Esophagus muscularis mucosa (tissue), 4 donors: ENCODE measurements at regions of chr15 and their contacts with region 1.

Region 1: GRCh38 chr15:75453703-75454470 is 2.4 kb upstream of the SIN3A start:
- DNase-seq: peak; percentile 99
- H3K4me3 ChIP-seq: peak overlapping the region; percentile 88 to 95 (median 92)
- H3K27ac ChIP-seq: peak overlapping the region; percentile 97 to 100 (median 100)
- H3K4me1 ChIP-seq: peaks cover 24 to 36% (median 31%) of the 10 kb centered on the region in 4 donors
- H3K27me3 ChIP-seq: no peaks in the 10 kb centered on the region
- CTCF ChIP-seq: no peak
- EP300 ChIP-seq: no peak
- POLR2A ChIP-seq: peak; percentile 50

Region 2: DNA sequence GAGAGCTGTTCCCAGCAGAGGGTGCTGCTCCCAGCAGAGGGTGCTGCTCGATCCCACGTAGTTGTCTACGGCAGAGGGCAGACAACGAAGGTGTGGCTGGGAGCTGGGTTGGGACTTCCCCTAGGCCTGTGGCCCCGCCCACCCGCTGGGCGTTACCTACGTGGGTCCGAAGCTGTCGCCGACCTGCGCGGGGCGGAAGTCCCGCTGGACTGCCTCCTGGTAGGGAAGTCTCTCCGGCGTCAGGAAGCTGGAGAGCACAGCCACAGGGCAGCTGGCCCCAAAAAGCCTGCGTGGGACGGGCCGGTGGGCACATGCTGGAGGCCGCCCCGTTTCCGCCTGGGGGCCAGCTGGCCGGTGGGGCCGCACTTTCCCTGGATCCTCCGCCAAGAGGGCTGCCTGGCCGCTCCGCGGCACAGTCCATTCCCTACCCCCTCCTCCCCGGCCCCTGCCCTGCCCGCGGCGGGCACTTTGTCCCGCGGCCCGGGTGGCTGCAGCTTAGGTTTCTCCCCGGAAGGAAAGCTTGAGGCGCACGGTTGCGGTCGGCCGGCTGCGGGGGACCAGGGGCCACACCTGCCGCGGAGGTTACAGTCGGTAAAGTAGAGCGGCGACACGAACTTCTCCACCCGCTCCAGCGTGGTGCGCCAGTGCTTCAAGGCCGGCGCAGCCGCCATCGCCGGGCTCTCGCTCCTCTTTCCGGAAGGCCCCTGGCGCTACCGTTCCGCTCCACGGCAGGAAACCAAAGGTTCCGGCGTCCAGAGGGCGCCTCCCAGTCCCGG is 85.8 kb before region 1 on chr15 and contains the start of gene MAN2C1:
- intact Hi-C with region 1: loop called (anchors 2 kb)
- DNase-seq: peak; percentile 98
- H3K4me3 ChIP-seq: peak within 1 kb of the TSS; percentile 69 to 83 (median 80)
- H3K27ac ChIP-seq: peak within 1 kb of the TSS; percentile 89 to 100 (median 96)
- H3K4me1 ChIP-seq: peaks cover 20 to 29% (median 21%) of the 10 kb centered on the region in 4 donors
- H3K27me3 ChIP-seq: no peaks in the 10 kb centered on the region
- CTCF ChIP-seq: peak; percentile 73 to 86 (median 79)
- EP300 ChIP-seq: no peak
- POLR2A ChIP-seq: no peak
- total RNA-seq, gene MAN2C1: 67.4 to 163 (median 125) TPM

Region 3: GRCh38 chr15:75397494-75397893 is 56.4 kb before region 1 on chr15:
- intact Hi-C with region 1: no loop called
- DNase-seq: no peak
- H3K4me3 ChIP-seq: no peak overlapping the region
- H3K27ac ChIP-seq: no peak overlapping the region
- H3K4me1 ChIP-seq: peaks cover 0 to 4% (median 0%) of the 10 kb centered on the region in 4 donors
- H3K27me3 ChIP-seq: no peaks in the 10 kb centered on the region
- CTCF ChIP-seq: no peak
- EP300 ChIP-seq: no peak
- POLR2A ChIP-seq: no peak

Region 4: DNA sequence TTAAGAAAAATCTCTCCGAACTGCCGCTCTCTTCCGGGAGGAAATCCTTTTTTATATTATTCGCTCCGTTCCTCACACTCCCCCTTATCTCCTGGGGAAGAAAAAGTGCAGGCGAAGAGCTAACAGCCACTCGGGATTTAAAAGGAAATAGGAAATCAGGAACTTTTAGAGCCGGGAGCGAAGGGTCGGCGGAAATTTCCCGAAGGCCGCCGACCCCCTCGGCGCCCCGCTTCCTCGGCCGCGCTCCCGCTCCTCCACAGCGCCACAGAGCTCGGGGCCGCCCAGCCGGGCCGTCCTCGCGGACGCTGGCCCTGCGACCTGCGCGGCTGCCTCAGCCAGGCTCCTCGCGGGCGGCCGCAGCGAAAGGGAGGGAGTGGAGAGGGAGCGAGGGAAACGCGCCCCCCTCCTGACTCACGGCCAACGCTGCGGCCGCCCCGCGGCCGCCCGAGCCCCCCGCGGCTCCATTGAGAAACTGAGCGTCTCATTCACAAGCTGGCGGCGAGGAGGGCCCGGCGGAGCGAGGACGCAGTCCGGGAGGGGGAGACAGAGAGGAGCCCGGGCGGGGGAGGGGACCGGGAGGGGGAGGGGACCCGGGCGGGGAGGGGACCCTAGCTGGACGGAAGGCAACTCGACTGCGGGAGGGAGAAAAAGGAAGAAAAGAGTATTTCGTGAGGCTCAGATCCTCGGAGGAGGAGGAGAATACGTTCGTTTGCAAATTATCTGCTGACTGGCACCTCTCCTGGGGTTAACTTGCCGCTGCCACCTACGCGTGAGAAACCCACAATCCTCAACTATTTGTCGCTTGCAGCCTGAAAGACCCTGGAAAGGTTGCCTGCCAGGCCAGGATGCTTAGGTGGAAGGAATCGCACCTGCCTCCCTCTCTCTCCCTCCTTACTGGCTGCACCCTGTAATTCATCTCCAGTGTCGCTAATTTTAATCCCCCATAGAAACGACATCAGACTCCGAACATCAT is 125.3 kb after region 1 on chr15 and contains the start of gene PTPN9:
- intact Hi-C with region 1: loop called (anchors 5 kb)
- DNase-seq: peak; percentile 93
- H3K4me3 ChIP-seq: peak within 1 kb of the TSS; percentile 74 to 94 (median 88)
- H3K27ac ChIP-seq: peak within 1 kb of the TSS; percentile 86 to 93 (median 92)
- H3K4me1 ChIP-seq: peaks cover 17 to 43% (median 37%) of the 10 kb centered on the region in 4 donors
- H3K27me3 ChIP-seq: no peaks in the 10 kb centered on the region
- CTCF ChIP-seq: peak; percentile 26 to 70 (median 44)
- EP300 ChIP-seq: no peak
- POLR2A ChIP-seq: no peak
- total RNA-seq, gene PTPN9: 20.3 to 31.6 (median 27.5) TPM

Region 5: DNA sequence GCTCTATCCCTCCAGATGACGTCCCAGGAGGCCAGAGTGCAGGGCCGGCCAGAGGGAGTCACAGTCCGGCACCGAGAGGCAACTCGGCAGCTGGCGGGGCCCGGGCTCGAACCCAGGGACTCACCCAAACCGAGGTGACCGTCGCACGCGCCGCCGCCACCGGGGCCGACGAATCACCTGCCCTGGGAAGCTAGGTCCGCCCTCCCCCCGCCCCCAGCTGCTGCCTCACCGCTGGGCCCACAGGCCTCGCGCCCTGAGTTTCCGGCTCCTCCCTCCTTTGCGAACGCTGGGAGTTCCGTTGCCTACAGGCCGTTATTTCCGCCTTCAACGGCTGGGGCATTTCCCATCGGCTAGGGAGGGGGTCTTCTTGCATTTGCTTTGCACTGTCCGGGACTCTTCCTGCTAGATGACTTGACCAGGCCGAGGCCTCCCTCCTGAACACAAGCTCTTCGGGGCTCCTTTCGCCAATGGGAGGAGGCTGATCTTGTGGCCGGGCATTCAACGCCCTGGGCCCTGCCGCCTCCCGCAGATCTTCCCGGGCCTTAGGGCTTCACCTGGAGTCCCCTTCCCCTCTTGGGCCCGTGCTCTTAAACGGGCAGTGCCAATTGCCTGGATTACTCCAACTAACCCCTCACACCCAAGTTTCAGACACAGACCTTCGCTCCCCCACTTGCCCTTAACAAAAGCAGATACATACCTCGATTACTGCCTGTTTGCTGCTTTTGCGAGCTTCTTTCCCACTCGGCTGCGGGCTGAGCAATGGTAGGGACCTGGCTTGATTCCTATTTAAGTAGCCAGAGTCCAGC is 171.9 kb after region 1 on chr15 and contains the start of gene SNUPN:
- intact Hi-C with region 1: loop called (anchors 5 kb)
- DNase-seq: peak; percentile 98
- H3K4me3 ChIP-seq: peak within 1 kb of the TSS; percentile 79 to 95 (median 92)
- H3K27ac ChIP-seq: peak within 1 kb of the TSS; percentile 91 to 96 (median 96)
- H3K4me1 ChIP-seq: peaks cover 15 to 40% (median 25%) of the 10 kb centered on the region in 4 donors
- H3K27me3 ChIP-seq: no peaks in the 10 kb centered on the region
- CTCF ChIP-seq: peak in 1 of 3 experiments; percentile 20
- EP300 ChIP-seq: no peak
- POLR2A ChIP-seq: no peak
- total RNA-seq, gene SNUPN: 16.6 to 23.4 (median 18.8) TPM